ENCODE measurements at regions of chr2 and their contacts with region 1.

Region 1: DNA sequence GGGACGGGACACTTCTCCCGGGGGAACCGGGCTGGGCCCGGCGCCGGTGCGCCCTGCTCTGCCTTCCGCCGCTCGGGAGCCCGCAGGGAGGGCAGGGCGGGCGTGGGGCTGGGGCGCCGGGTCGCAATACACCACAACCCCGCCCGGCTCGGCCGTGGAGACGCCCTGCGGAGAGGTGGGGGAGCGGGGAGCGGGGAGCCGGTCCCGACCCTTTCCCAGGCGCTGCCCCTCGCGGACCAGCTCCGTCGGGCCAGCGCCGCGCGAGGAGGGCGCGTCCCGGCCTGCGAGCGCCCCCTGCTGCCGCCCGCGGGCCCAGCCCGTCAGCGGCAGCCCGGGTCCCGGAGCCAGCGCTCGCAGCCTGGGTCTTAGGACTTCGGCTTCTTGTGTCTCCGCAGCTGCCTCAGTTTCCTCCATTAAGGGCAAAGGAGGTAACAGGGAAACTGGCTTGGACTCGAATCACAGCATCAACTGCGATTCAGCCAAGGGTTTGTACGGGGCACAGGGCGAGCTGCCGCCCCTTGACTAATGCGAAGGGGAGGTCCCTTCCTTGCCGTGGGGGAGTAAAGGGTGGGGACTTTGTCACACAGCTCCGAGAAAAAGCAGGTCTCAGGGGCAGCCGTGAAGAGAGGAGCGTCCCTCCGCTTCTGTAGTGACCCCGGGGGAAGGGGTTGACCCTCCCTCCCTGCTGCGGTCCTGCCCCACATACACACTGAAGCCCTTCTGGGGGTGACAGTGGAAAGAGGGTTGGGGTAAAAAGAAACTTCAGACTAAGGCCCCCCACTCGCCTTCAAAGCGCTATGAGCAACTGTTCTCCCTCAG is 717 bp upstream of the ADRA2B start:
- DNase-seq: peak; percentile 31 to 69 (median 52)
- ATAC-seq: peak; percentile 88
- H3K4me3 ChIP-seq: peak overlapping the region; percentile 31 to 54
- H3K27ac ChIP-seq: peak overlapping the region; percentile 8 to 69 (median 42)
- H3K4me1 ChIP-seq: peaks cover 14% of the 10 kb centered on the region
- H3K27me3 ChIP-seq: peaks cover 0 to 5% of the 10 kb centered on the region in 2 donors
- CTCF ChIP-seq: peak; percentile 40 to 98 (median 92)
- POLR2A ChIP-seq: no peak

Region 2: DNA sequence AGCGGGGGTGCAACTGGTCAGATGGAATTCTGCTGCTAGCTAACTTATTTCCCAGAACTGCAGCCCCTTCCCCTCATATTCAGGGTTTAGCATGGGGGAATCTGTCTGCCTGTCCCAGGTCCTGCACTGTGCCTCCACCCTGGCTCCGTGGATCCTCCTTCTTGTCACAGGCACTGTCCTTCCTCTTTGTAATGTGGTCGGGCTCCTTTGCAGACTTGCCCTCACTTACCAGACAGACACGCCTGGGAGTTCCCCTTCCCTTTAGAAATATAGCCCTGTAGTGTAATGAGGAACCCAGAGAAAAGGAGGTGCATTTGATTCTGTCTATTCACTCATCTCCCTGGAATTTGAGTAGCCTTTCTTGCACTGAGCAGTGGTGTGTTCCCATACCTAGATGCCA is 416.6 kb before region 1 on chr2:
- intact Hi-C with region 1: no loop called
- DNase-seq: peak in 1 of 4 donors; percentile 16
- ATAC-seq: no peak
- H3K4me3 ChIP-seq: no peak overlapping the region
- H3K27ac ChIP-seq: no peak overlapping the region
- H3K4me1 ChIP-seq: no peaks in the 10 kb centered on the region
- H3K27me3 ChIP-seq: no peaks in the 10 kb centered on the region
- CTCF ChIP-seq: no peak
- POLR2A ChIP-seq: no peak

Region 3: GRCh38 chr2:96024336-96025193 is 92.5 kb before region 1 on chr2:
- intact Hi-C with region 1: loop called (anchors 10 kb)
- DNase-seq: no peak
- ATAC-seq: no peak
- H3K4me3 ChIP-seq: no peak overlapping the region
- H3K27ac ChIP-seq: no peak overlapping the region
- H3K4me1 ChIP-seq: peaks cover 6% of the 10 kb centered on the region
- H3K27me3 ChIP-seq: no peaks in the 10 kb centered on the region
- CTCF ChIP-seq: no peak
- POLR2A ChIP-seq: no peak

Region 4: GRCh38 chr2:96174251-96175144 is 57.4 kb after region 1 on chr2:
- intact Hi-C with region 1: loop called (anchors 10 kb)
- DNase-seq: peak; percentile 81 to 85 (median 82)
- ATAC-seq: peak; percentile 97
- H3K4me3 ChIP-seq: no peak overlapping the region
- H3K27ac ChIP-seq: no peak overlapping the region
- H3K4me1 ChIP-seq: no peaks in the 10 kb centered on the region
- H3K27me3 ChIP-seq: no peaks in the 10 kb centered on the region
- CTCF ChIP-seq: peak; percentile 67 to 92 (median 86)
- POLR2A ChIP-seq: no peak

Measured in body of pancreas (tissue), 4 donors.